T-cell (primary cell): ENCODE measurements at regions of chr20 and their contacts with region 1.

Region 1: DNA sequence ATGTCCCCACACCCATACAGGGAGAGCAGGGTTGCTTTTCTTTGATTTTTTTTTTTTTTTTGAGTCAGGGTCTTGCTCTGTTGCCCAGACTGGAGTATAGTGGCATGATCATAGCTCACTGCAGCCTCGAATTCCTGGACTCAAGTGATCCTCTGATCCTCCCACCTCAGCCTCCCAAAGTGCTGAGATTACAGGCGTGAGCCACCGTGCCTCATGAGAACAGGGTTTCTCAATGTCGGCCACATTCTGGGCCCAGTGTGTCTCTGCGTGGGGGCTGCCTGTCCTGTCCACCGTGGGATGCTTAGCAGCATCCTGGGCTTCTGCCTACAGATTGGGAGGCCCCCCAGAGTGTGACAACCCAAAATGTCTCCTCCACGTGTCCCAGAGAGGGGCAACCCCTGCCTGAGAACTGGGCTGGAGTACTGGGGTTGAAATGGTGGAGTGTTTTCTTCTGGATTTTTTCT is 50.4 kb downstream of the UBE2V1 start:
- DNase-seq: no peak
- ATAC-seq: no peak
- H3K4me3 ChIP-seq: no peak overlapping the region
- H3K4me3 Mint-ChIP-seq: no peak overlapping the region
- H3K27ac ChIP-seq: no peak overlapping the region
- H3K27ac Mint-ChIP-seq: no peak overlapping the region
- H3K4me1 ChIP-seq: no peaks in the 10 kb centered on the region
- H3K4me1 Mint-ChIP-seq: no peaks in the 10 kb centered on the region
- H3K27me3 ChIP-seq: peaks cover 0 to 24% of the 10 kb centered on the region in 2 experiments
- H3K27me3 Mint-ChIP-seq: no peaks in the 10 kb centered on the region

Region 2: GRCh38 chr20:49768204-49769047 is 294.1 kb before region 1 on chr20:
- CTCF ChIA-PET with region 1: no interaction called
- POLR2A ChIA-PET with region 1: no interaction called
- DNase-seq: peak in 24 of 35 experiments; percentile 2 to 63 (median 12)
- ATAC-seq: peak; percentile 68 to 98 (median 84)
- H3K4me3 ChIP-seq: peak overlapping the region in 1 of 2 donors; percentile 11
- H3K4me3 Mint-ChIP-seq: peak overlapping the region in 1 of 3 donors; percentile 58
- H3K27ac ChIP-seq: no peak overlapping the region
- H3K27ac Mint-ChIP-seq: no peak overlapping the region
- H3K4me1 ChIP-seq: peaks cover 13 to 28% of the 10 kb centered on the region in 2 experiments
- H3K4me1 Mint-ChIP-seq: peaks cover 20 to 34% (median 29%) of the 10 kb centered on the region in 3 donors
- H3K27me3 ChIP-seq: peaks cover 4 to 30% of the 10 kb centered on the region in 2 experiments
- H3K27me3 Mint-ChIP-seq: peaks cover 44 to 62% of the 10 kb centered on the region in 2 donors

Region 3: GRCh38 chr20:49999329-49999728 is 63.2 kb before region 1 on chr20:
- CTCF ChIA-PET with region 1: no interaction called
- POLR2A ChIA-PET with region 1: interaction called in 1 of 2 experiments, 14 read pairs
- DNase-seq: peak in 1 of 35 experiments; percentile 24
- ATAC-seq: no peak
- H3K4me3 ChIP-seq: no peak overlapping the region
- H3K4me3 Mint-ChIP-seq: no peak overlapping the region
- H3K27ac ChIP-seq: no peak overlapping the region
- H3K27ac Mint-ChIP-seq: no peak overlapping the region
- H3K4me1 ChIP-seq: no peaks in the 10 kb centered on the region
- H3K4me1 Mint-ChIP-seq: no peaks in the 10 kb centered on the region
- H3K27me3 ChIP-seq: peaks cover 0 to 13% of the 10 kb centered on the region in 2 experiments
- H3K27me3 Mint-ChIP-seq: peaks cover 8 to 15% of the 10 kb centered on the region in 2 donors

Region 4: DNA sequence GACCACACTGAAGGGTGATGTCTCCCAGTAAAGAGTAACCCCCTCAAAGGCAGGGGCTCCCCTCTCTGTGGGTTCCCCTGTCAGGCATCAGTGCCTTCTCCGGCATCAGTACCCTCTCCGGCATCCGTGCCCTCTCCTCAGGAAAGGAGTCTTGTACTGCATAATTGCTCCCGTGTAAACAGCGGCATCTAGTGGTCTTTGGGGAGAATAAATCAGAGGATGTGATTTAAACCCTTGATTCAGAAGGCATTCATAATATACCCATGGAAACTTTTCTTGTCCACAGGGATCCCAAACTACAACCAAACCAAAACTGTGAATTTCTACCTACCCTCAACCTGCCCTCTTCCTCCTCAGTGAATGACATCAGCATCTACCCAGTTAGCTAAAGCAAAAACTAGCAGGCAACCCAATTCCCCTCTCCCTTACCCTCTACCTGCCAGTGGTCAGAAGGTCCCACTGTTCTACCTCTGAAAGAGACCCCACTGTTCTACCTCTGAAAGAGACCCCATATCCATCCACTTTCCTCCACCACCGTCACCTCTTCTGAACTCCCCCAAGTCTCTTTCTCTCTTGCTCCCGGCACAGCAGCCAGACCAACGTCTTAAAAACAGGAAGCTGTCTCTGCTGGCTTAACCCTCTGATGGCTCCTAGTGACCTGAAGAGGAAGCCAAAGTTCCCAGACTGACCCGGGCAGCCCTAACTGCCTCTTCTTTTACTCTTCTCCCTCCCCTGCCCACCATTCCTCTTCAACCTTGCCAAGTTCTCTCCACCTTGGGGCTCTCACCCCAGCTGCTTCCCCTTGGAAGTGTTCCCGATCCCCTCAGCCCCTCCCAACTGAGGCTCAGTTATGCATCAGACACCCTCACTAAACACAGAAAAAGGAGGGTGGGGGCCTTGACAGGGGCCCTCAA is 23.2 kb after region 1 on chr20:
- CTCF ChIA-PET with region 1: no interaction called
- POLR2A ChIA-PET with region 1: no interaction called
- DNase-seq: peak in 27 of 35 experiments; percentile 4 to 74 (median 23)
- ATAC-seq: peak; percentile 82 to 86 (median 84)
- H3K4me3 ChIP-seq: peak overlapping the region; percentile 21 to 39
- H3K4me3 Mint-ChIP-seq: peak overlapping the region; percentile 77 to 81 (median 77)
- H3K27ac ChIP-seq: peak overlapping the region; percentile 1
- H3K27ac Mint-ChIP-seq: peak overlapping the region; percentile 82 to 93
- H3K4me1 ChIP-seq: peaks cover 7 to 17% of the 10 kb centered on the region in 2 experiments
- H3K4me1 Mint-ChIP-seq: peaks cover 37 to 38% (median 38%) of the 10 kb centered on the region in 3 donors
- H3K27me3 ChIP-seq: no peaks in the 10 kb centered on the region
- H3K27me3 Mint-ChIP-seq: no peaks in the 10 kb centered on the region